ENCODE measurements at regions of chr15 and their contacts with region 1.

Region 1: GRCh38 chr15:53448232-53449001 is 311.0 kb downstream of the WDR72 start:
- DNase-seq: no peak
- ATAC-seq: no peak
- H3K4me3 ChIP-seq: no peak overlapping the region
- H3K27ac ChIP-seq: no peak overlapping the region
- H3K4me1 ChIP-seq: peaks cover 0 to 6% (median 0%) of the 10 kb centered on the region in 12 donors
- H3K27me3 ChIP-seq: no peaks in the 10 kb centered on the region
- CTCF ChIP-seq: no peak
- POLR2A ChIP-seq: no peak

Region 2: DNA sequence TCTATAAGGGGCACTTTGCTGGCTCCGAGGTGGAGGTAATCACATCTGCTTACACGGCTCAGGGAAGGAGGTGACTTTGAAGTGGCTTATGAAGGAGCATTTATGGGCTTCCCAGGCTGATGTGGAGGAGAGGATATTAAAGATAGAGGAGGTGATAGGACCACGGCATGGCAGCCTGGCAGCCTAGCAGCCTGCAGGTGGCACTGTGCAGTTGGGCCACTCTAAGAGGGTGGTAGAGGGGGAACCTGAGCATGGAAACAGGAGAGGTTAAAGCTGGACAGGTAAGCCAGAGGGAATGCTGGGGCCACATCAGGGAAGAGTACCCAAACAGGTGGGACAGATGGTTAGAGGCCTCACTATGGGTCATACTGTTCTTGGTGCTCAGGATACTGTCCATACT is 64.0 kb before region 1 on chr15:
- intact Hi-C with region 1: loop called in 1 of 10 experiments (anchors 10 kb)
- DNase-seq: no peak
- ATAC-seq: no peak
- H3K4me3 ChIP-seq: no peak overlapping the region
- H3K27ac ChIP-seq: no peak overlapping the region
- H3K4me1 ChIP-seq: no peaks in the 10 kb centered on the region
- H3K27me3 ChIP-seq: peaks cover 0 to 4% (median 0%) of the 10 kb centered on the region in 9 donors
- CTCF ChIP-seq: peak in 1 of 12 donors; percentile 18
- POLR2A ChIP-seq: no peak